ENCODE measurements at regions of chr2 and their contacts with region 1.

Region 1: GRCh38 chr2:54497763-54498680 is 41.9 kb downstream of the SPTBN1 start:
- DNase-seq: no peak
- ATAC-seq: peak; percentile 45

Region 2: GRCh38 chr2:54259413-54260240 is 238.4 kb before region 1 on chr2:
- intact Hi-C with region 1: no loop called
- DNase-seq: no peak
- ATAC-seq: no peak

Region 3: DNA sequence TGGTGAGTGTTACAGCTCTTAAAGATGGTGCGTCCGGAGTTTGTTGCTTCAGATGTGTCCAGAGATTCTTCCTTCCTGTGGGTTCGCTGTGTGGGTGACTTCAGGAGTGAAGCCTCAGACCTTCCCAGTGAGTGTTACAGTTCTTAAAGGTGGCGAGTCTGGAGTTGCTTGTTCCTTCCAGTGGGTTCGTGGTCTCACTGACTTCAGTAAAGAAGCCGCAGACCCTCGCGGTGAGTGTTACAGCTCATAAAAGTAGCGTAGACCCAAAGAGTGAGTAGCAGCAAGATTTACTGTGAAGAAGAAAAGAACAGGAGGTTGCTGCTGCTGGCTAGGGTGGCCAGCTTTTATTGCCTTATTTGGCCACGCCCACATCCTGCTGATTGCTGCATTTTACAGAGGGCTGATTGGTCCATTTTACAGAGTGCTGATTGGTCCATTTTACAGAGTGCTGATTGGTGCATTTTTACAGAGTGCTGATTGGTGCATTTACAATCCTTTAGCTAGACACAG is 75.9 kb before region 1 on chr2:
- intact Hi-C with region 1: loop called (anchors 5 kb)
- DNase-seq: no peak
- ATAC-seq: no peak

Region 4: GRCh38 chr2:54461261-54461660 is 36.8 kb before region 1 on chr2:
- intact Hi-C with region 1: loop called (anchors 5 kb)
- DNase-seq: no peak
- ATAC-seq: peak; percentile 44

Region 5: DNA sequence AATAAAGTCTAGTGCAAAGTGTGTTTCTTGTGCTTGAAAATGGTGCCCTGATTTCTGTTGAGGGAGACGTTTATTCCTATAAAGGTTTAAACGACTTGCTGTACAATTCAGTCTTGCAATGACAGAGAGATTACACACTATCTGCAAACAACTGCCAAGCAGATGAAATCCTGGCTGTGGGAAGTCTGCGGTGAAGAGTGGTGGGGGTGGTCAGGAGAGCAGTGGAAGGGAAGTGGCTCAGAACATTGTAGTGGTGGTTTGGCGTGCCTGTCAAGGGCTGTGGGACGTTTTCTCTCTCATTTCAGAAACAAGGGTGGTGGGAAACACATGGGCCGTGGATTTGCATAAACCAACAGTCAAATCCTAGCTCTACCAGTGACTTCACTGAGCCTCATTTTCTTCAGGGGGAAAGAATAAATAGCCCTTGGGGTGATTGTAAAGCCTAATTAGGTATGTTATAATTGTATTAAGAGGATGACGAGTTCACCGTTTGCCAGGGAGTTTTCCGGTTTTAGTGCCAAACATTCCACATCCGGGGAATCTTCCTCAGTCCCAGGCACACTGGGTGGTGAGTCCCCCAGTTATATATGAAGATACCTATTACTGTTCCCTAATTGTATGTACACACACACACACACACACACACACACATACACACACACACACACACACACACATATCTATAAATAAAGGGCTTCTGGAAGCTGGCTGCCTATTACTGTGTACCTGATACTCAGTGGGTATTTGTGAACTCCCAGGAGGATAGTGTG is 73.1 kb after region 1 on chr2:
- intact Hi-C with region 1: loop called (anchors 5 kb)
- DNase-seq: no peak
- ATAC-seq: peak; percentile 69

Measured in Right ventricle myocardium inferior (tissue), 1 donor.